IMR-90 (cell line): ENCODE measurements at regions of chr22 and their contacts with region 1.

Region 1: GRCh38 chr22:41746567-41747400 is 47.5 kb downstream of the MEI1 start:
- DNase-seq: peak; percentile 76
- ATAC-seq: peak; percentile 99
- H3K4me3 ChIP-seq: no peak overlapping the region
- H3K27ac ChIP-seq: no peak overlapping the region
- H3K4me1 ChIP-seq: no peaks in the 10 kb centered on the region; the same call in 1 of the 2 replicates
- H3K27me3 ChIP-seq: peaks cover 31% of the 10 kb centered on the region
- CTCF ChIP-seq: peak; percentile 85
- POLR2A ChIP-seq: no peak
- RAD21 ChIP-seq: peak; percentile 86

Region 2: DNA sequence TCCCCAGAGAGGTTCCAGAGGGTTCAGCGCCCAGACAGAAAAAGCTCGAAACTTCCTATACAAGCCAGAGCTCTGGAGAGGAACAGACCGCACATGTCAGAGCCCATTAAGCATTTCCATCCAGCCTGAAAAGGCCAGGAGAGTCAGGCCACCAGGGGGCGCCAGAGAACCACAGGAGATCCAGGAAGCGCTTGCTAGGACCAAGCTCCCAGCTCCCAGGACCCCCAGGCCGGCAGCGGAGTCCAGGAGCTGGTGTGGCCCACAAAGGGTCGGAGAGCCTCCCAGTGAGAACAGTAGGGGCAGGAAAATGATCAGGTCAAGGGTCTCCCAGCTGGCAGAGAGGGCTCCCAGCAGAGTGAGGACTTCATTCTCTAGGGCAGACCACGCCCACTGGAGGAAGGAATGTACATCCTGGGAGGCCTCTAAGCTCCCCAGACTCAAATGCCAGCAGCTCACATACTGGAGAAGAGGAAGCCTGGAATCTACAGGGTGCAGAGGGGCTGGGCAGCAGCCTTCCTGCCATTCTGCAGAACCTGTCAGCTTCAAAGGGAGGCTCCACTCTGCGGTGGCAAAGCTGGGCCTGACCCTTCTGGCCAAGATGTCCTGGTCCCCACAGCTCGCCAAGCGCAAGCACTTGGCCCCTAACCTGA is 49.5 kb before region 1 on chr22:
- CTCF ChIA-PET with region 1: interaction called, 10 read pairs
- POLR2A ChIA-PET with region 1: no interaction called
- dilution Hi-C with region 1: no loop called
- in situ Hi-C with region 1: no loop called
- intact Hi-C with region 1: loop called (anchors 2 kb)
- DNase-seq: peak; percentile 80
- ATAC-seq: peak; percentile 92
- H3K4me3 ChIP-seq: no peak overlapping the region
- H3K27ac ChIP-seq: peak overlapping the region; percentile 37
- H3K4me1 ChIP-seq: peaks cover 6% of the 10 kb centered on the region
- H3K27me3 ChIP-seq: no peaks in the 10 kb centered on the region; the same call in 1 of the 2 replicates
- CTCF ChIP-seq: peak; percentile 88
- POLR2A ChIP-seq: no peak
- RAD21 ChIP-seq: peak; percentile 84

Region 3: GRCh38 chr22:41857155-41857859 is 110.5 kb after region 1 on chr22:
- CTCF ChIA-PET with region 1: interaction called, 3 read pairs
- POLR2A ChIA-PET with region 1: no interaction called
- dilution Hi-C with region 1: no loop called
- in situ Hi-C with region 1: no loop called
- intact Hi-C with region 1: loop called (anchors 10 kb)
- DNase-seq: peak; percentile 72
- ATAC-seq: peak; percentile 64
- H3K4me3 ChIP-seq: no peak overlapping the region
- H3K27ac ChIP-seq: no peak overlapping the region
- H3K4me1 ChIP-seq: peaks cover 7% of the 10 kb centered on the region
- H3K27me3 ChIP-seq: no peaks in the 10 kb centered on the region
- CTCF ChIP-seq: peak; percentile 60
- POLR2A ChIP-seq: no peak
- RAD21 ChIP-seq: peak; percentile 56

Region 4: DNA sequence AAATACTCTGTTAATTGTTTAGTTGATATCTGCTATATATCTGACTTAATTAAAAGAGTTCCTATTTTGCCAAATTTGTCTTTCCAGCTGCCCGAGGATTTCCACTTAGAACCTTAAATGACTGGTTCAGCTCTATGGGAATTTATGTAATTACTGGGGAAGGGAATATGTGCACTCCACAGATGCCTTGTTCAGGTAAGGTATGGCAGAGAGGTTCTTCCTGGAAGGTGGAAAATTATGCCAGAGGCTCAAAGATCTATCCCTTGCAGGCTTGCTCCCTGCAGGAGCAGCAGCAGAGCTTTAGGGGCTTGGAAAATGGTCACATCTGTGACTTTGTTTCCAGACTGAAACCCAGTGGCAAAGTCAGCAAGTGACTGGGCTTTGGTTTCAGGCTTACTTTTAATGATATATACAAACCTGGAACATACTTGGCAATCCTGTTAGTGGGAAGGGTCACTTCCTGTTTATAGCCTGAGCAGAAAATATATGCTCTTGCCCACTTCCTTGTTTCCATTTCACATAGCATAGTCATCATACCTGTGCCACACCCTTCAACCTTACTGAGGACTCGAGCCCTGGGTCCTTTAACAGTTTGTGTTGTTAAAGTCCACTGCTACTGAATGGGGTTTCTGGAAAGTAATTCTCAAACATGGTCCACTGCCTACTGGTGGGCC is 275.5 kb after region 1 on chr22:
- CTCF ChIA-PET with region 1: no interaction called
- POLR2A ChIA-PET with region 1: no interaction called
- dilution Hi-C with region 1: no loop called
- in situ Hi-C with region 1: no loop called
- intact Hi-C with region 1: no loop called
- DNase-seq: no peak
- ATAC-seq: no peak
- H3K4me3 ChIP-seq: no peak overlapping the region
- H3K27ac ChIP-seq: no peak overlapping the region
- H3K4me1 ChIP-seq: no peaks in the 10 kb centered on the region
- H3K27me3 ChIP-seq: peaks cover 11% of the 10 kb centered on the region
- CTCF ChIP-seq: no peak
- POLR2A ChIP-seq: no peak
- RAD21 ChIP-seq: no peak